ENCODE measurements at regions of chr14 and their contacts with region 1.

Region 1: DNA sequence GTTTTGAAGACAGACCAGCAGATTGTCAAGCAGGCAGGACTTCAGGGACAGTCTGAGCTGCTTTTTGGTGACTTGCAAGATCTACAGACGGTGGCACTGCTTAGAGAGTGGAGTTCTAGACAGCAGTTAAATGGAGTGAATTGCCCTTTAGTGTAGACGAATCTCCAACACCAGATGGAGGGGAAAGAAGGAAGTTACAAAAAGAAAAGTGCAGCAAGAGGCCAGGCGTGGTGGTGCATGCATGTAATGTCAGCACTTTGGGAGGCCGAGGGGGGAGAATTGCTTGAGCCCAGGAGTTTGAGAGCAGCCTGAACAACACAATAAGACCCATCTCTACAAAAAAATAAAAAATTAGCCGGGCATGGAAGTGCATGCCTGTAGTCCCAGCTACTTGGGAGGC is 8.4 kb upstream of the HHIPL1 start:
- DNase-seq: no peak
- ATAC-seq: no peak
- H3K4me3 ChIP-seq: no peak overlapping the region
- H3K27ac ChIP-seq: no peak overlapping the region
- H3K4me1 ChIP-seq: no peaks in the 10 kb centered on the region
- H3K27me3 ChIP-seq: no peaks in the 10 kb centered on the region
- CTCF ChIP-seq: no peak
- POLR2A ChIP-seq: no peak

Region 2: DNA sequence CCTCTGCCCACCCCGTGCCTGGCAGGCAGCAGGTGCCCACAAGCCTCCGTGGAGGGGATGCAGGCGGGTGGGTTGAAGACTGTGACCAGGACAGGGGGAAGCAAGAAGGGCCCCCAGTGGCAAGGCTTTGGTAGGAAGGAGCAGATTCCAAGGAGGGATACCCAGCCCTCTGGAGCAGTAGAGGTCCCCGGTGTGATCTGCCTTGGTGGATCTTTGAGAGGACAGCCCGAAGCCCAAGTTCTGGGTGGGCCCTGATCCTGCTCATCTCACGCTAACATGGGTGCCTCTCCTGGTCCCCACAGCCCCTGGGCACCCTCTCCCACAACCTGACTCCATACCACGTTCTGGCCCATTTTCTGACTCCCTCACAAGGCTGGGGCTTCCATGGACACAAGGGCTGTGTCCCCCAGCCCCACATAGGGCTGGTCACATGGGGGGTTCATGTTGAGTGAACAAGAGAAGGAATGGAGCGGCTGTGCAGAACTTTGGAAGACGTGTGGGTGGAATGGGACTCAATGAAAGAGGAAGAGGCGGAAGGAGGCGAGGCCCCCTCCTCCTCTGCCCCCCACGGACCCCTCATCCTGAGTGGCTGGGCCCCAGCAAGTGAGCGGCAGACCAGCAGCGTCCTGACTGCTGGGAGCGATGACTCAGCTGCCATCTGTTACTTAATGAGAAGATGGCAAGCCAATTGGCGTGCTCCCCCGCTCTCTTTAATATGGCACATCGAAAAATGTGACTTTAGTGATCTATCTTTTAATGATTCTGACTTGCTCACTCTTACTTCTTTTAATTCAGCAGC is 287.5 kb before region 1 on chr14:
- in situ Hi-C with region 1: no loop called
- intact Hi-C with region 1: no loop called
- DNase-seq: no peak
- ATAC-seq: no peak
- H3K4me3 ChIP-seq: no peak overlapping the region
- H3K27ac ChIP-seq: no peak overlapping the region
- H3K4me1 ChIP-seq: no peaks in the 10 kb centered on the region
- H3K27me3 ChIP-seq: no peaks in the 10 kb centered on the region
- CTCF ChIP-seq: no peak
- POLR2A ChIP-seq: no peak

Region 3: DNA sequence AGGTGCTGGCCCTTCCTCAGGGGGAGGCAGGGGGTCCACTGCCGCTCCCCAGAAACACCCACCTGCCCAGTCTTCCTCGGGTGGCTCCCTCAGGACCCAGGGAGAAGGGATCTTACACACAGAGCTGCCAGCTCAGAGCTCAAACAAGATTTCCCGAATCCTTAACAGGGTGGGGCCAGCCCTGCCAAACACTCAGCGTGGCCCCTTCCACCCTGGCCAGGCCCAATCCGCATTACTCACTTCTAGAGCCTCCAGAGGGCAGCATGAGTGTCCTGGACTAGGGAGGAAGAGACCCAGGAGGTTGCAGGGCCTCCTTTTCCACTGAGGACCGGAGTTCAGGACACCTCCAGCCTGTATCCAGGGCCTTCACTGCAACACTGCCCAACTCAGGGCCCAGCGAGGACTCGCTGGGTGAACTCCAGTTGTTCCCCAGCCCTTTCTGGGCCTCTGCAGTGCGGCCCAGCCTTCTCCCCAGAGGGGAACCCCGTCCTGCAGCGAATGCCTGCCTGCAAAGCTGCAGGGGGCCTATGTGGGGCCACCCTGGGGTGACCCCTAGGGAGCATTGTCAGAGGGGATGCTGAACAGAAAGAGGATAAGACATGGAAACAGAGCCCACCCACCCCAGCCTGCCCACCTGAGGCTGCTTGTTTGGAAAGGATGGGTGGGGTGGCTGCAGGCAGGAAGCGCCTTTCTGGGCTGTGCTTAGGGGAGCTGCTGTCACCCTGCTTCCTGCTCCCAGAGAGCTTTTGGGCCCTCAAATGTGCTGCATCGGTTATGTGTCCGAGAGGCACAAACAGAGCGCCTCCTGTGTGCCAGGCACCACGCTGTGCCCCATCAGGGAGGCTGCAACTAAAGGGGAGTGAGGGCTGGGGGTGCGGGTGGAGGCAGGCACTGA is 111.4 kb before region 1 on chr14:
- in situ Hi-C with region 1: loop called in 2 of 4 experiments (anchors 5 to 10 kb)
- intact Hi-C with region 1: no loop called
- DNase-seq: no peak
- ATAC-seq: peak in 1 of 2 donors; percentile 28
- H3K4me3 ChIP-seq: no peak overlapping the region
- H3K27ac ChIP-seq: peak overlapping the region in 2 of 4 donors; percentile 4 to 46
- H3K4me1 ChIP-seq: no peaks in the 10 kb centered on the region
- H3K27me3 ChIP-seq: no peaks in the 10 kb centered on the region
- CTCF ChIP-seq: no peak
- POLR2A ChIP-seq: no peak